ENCODE measurements at regions of chr15 and their contacts with region 1.

Region 1: GRCh38 chr15:84748274-84749110 is at the start of gene ZNF592:
- DNase-seq: peak; percentile 94
- H3K4me3 Mint-ChIP-seq: peak within 1 kb of the TSS; percentile 97
- H3K27ac Mint-ChIP-seq: peak within 1 kb of the TSS; percentile 94
- H3K4me1 Mint-ChIP-seq: peaks cover 50% of the 10 kb centered on the region
- H3K27me3 Mint-ChIP-seq: no peaks in the 10 kb centered on the region
- total RNA-seq, gene ZNF592: 30.0 and 30.6 TPM in 2 replicates

Region 2: GRCh38 chr15:84761607-84762131 is 13.2 kb after region 1 on chr15:
- intact Hi-C with region 1: loop called (anchors 1 kb)
- DNase-seq: peak; percentile 66
- H3K4me3 Mint-ChIP-seq: no peak overlapping the region
- H3K27ac Mint-ChIP-seq: no peak overlapping the region
- H3K4me1 Mint-ChIP-seq: peaks cover 21% of the 10 kb centered on the region
- H3K27me3 Mint-ChIP-seq: no peaks in the 10 kb centered on the region